H1 (cell line): ENCODE measurements at regions of chr9 and their contacts with region 1.

Region 1: DNA sequence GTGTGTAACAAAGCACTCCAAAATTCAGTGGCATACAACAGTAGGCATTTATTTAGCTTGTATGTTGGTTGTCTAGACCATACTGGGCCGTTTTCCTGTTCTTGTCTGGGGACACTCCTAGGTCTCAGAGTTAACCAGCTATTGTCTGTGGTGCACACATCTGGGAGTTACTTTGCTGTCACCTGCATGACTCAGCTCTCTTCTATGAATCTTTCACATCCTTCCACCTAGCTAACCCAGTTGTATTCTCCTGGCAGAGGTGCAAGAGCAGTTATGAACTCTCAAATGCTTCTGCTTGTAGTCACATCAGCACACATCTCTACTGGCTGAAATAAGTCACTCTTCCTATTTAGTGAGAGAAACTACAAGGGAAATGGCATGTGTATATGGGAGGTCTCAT is 138.1 kb downstream of the BAAT start:
- DNase-seq: no peak
- H3K4me3 ChIP-seq: no peak overlapping the region
- H3K27ac ChIP-seq: no peak overlapping the region
- H3K4me1 ChIP-seq: no peaks in the 10 kb centered on the region
- H3K27me3 ChIP-seq: no peaks in the 10 kb centered on the region
- CTCF ChIP-seq: no peak
- EP300 ChIP-seq: no peak
- POLR2A ChIP-seq: no peak
- RAD21 ChIP-seq: no peak

Region 2: DNA sequence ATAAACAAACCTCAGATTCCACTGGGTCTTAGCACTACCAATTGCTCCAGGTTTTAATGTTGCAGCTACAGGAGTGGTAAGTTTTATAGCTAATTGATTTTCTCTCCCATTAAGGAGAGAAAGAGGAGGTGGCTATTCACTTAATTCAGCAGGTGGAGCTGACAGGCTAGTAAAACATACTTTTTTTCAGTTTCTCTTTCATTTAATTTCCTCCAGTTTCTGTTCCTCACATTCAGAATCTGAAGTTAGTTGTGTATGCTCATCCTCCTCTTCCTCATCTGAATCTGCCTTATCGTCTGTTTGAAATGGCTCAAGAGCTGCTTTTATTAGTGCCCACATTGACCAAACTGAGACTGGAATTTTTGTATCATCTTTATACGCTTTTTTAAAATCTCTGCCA is 120.1 kb before region 1 on chr9:
- CTCF ChIA-PET with region 1: no interaction called
- POLR2A ChIA-PET with region 1: no interaction called
- DNase-seq: no peak
- H3K4me3 ChIP-seq: no peak overlapping the region
- H3K27ac ChIP-seq: no peak overlapping the region
- H3K4me1 ChIP-seq: peaks cover 0 to 3% (median 1%) of the 10 kb centered on the region in 4 experiments; a peak in 1 of 7 replicates
- H3K27me3 ChIP-seq: no peaks in the 10 kb centered on the region
- CTCF ChIP-seq: no peak
- EP300 ChIP-seq: no peak
- POLR2A ChIP-seq: no peak
- RAD21 ChIP-seq: no peak

Region 3: GRCh38 chr9:101269591-101270283 is 23.0 kb after region 1 on chr9:
- CTCF ChIA-PET with region 1: interaction called, 11 read pairs
- POLR2A ChIA-PET with region 1: no interaction called
- DNase-seq: no peak
- H3K4me3 ChIP-seq: peak overlapping the region in 1 of 4 experiments; percentile 30; a peak in 1 of 8 replicates
- H3K27ac ChIP-seq: no peak overlapping the region
- H3K4me1 ChIP-seq: peaks cover 7 to 16% (median 11%) of the 10 kb centered on the region in 4 experiments; a peak in 6 of 7 replicates
- H3K27me3 ChIP-seq: no peaks in the 10 kb centered on the region
- CTCF ChIP-seq: no peak
- EP300 ChIP-seq: no peak
- POLR2A ChIP-seq: no peak
- RAD21 ChIP-seq: no peak